ENCODE measurements at regions of chr16 and their contacts with region 1.

Region 1: GRCh38 chr16:22206013-22206841 is at the start of gene EEF2K:
- DNase-seq: peak; percentile 94 to 98
- ATAC-seq: peak; percentile 84 to 89 (median 88)
- H3K4me3 ChIP-seq: peak within 1 kb of the TSS; percentile 88
- H3K27ac ChIP-seq: peak within 1 kb of the TSS; percentile 89
- H3K4me1 ChIP-seq: peaks cover 36% of the 10 kb centered on the region
- H3K27me3 ChIP-seq: no peaks in the 10 kb centered on the region
- CTCF ChIP-seq: peak; percentile 82
- total RNA-seq, gene EEF2K: 29.4 to 47.0 (median 34.3) TPM

Region 2: GRCh38 chr16:22220069-22220440 is 13.8 kb after region 1 on chr16:
- intact Hi-C with region 1: loop called in 1 of 2 experiments (anchors 2 kb)
- DNase-seq: peak; percentile 74 to 84
- ATAC-seq: peak; percentile 79 to 82 (median 82)
- H3K4me3 ChIP-seq: peak overlapping the region; percentile 49
- H3K27ac ChIP-seq: peak overlapping the region; percentile 96
- H3K4me1 ChIP-seq: peaks cover 64% of the 10 kb centered on the region
- H3K27me3 ChIP-seq: no peaks in the 10 kb centered on the region
- CTCF ChIP-seq: no peak